ENCODE measurements at regions of chr13 and their contacts with region 1.

Region 1: GRCh38 chr13:99501184-99501847 is at the start of gene TM9SF2:
- DNase-seq: peak; percentile 98
- H3K4me3 Mint-ChIP-seq: peak within 1 kb of the TSS; percentile 88
- H3K27ac Mint-ChIP-seq: peak within 1 kb of the TSS; percentile 88
- H3K4me1 Mint-ChIP-seq: peaks cover 67% of the 10 kb centered on the region
- H3K27me3 Mint-ChIP-seq: no peaks in the 10 kb centered on the region
- total RNA-seq, gene TM9SF2: 67.2 to 72.0 TPM

Region 2: DNA sequence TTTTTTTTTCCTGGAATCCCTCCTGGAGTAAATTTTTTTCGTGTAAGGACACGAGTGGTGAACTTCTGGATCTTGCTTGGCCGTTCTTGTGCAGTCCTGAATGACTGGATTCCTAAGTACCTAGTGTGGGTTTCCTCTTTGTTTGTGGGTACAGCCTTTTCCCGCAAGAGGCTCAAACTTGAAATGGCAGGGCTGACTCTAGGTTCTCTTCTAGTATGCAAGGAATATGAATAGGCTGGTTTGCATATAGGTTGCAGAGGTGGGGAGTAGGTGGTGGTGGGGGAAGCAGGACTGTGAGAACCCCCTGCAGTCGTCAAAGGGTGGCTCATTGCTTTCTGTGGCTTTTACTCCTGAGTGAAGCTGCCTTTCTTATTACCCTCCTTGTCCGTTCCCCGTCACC is 287.1 kb before region 1 on chr13:
- CTCF ChIA-PET with region 1: no interaction called
- POLR2A ChIA-PET with region 1: no interaction called
- intact Hi-C with region 1: loop called (anchors 5 kb)
- DNase-seq: peak; percentile 84
- H3K4me3 Mint-ChIP-seq: peak overlapping the region; percentile 78
- H3K27ac Mint-ChIP-seq: peak overlapping the region; percentile 78
- H3K4me1 Mint-ChIP-seq: peaks cover 78% of the 10 kb centered on the region
- H3K27me3 Mint-ChIP-seq: no peaks in the 10 kb centered on the region

Region 3: GRCh38 chr13:99386911-99387788 is 114.2 kb before region 1 on chr13:
- CTCF ChIA-PET with region 1: interaction called, 8 read pairs
- POLR2A ChIA-PET with region 1: no interaction called
- intact Hi-C with region 1: loop called (anchors 2 kb)
- DNase-seq: peak; percentile 92
- H3K4me3 Mint-ChIP-seq: no peak overlapping the region
- H3K27ac Mint-ChIP-seq: peak overlapping the region; percentile 61
- H3K4me1 Mint-ChIP-seq: peaks cover 64% of the 10 kb centered on the region
- H3K27me3 Mint-ChIP-seq: no peaks in the 10 kb centered on the region

Region 4: DNA sequence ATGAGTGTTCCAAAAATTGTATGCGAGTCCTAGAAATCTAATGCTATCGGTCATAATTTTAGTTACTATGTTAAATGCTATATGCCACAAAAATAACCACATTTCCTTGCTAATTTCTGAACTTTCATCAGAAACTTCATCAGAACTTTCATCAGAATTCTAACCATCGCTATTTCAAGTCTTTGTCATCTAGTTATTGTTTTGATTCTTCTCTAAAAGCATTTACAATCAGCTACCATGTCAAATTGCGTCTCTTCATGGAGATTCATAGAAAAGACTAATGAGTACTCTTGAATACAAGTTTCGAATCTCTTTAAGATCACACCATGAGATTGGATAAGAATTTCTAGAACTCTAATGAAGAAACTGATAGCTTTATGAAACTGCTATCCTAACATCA is 52.8 kb before region 1 on chr13:
- CTCF ChIA-PET with region 1: interaction called, 58 read pairs
- POLR2A ChIA-PET with region 1: no interaction called
- intact Hi-C with region 1: loop called (anchors 1 kb)
- DNase-seq: no peak
- H3K4me3 Mint-ChIP-seq: no peak overlapping the region
- H3K27ac Mint-ChIP-seq: peak overlapping the region; percentile 42
- H3K4me1 Mint-ChIP-seq: peaks cover 30% of the 10 kb centered on the region
- H3K27me3 Mint-ChIP-seq: peaks cover 17% of the 10 kb centered on the region

Region 5: DNA sequence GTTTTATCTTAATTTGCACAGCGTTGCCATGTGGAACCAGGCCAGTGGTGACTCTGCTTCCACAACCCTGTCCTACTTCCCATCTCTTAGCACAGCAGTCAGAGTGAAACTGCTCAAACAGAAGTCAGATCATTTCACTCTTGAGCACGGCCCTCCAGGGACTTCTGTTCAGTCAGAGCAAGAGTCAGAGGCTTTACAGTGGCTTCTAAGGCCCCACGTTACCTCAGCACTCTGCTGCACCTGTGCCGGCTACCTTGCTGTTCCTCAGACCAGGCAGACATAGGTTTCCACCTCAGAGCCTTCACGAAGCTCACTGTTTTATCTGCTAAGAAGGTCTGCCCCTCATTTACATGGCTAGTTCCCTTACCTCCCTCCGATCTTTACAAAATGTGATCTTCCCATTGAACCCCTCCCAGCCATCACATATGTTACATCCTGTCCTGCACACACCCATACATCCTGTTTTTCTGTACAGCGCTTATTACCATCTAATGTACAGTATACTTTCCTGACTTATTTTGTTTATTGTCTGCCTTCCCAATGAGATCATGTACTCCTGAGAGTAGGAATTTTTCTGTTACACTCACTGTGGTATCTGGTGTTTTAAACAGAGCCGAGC is 41.6 kb after region 1 on chr13:
- CTCF ChIA-PET with region 1: interaction called, 3 read pairs
- POLR2A ChIA-PET with region 1: no interaction called
- intact Hi-C with region 1: loop called (anchors 2 kb)
- DNase-seq: peak; percentile 78
- H3K4me3 Mint-ChIP-seq: no peak overlapping the region
- H3K27ac Mint-ChIP-seq: peak overlapping the region; percentile 24
- H3K4me1 Mint-ChIP-seq: peaks cover 51% of the 10 kb centered on the region
- H3K27me3 Mint-ChIP-seq: no peaks in the 10 kb centered on the region

Region 6: DNA sequence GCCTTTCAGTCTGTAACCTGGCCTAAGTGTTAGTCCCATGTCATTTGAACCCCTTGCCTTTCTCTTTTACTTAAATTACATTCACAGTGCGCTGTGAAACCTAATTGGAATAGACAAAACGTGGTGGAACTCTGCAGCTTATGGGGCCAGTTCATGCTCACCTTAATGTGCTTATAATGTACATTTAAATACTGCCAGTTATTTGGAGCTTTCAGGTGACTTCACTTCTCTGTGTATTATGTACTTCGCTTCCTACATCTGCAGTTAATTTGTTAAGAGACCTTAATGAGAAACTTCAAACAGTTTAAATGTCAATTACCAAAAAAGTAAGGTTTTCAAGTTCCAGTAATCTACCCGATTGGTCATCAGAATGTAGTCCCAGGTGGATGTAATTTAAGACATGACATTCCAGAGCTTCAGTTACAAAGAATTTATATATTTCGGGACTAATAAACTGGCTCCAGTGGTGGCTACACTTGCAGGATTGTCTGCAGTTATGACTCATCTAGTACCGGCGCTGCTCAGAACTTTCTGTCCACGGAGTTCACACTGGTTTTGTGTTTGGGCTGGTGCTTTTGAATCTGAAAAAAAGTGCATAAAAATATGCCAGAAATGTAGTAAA is 125.3 kb after region 1 on chr13:
- CTCF ChIA-PET with region 1: no interaction called
- POLR2A ChIA-PET with region 1: no interaction called
- intact Hi-C with region 1: no loop called
- DNase-seq: no peak
- H3K4me3 Mint-ChIP-seq: no peak overlapping the region
- H3K27ac Mint-ChIP-seq: no peak overlapping the region
- H3K4me1 Mint-ChIP-seq: peaks cover 4% of the 10 kb centered on the region
- H3K27me3 Mint-ChIP-seq: no peaks in the 10 kb centered on the region